ENCODE measurements at regions of chr6 and their contacts with region 1.

Region 1: DNA sequence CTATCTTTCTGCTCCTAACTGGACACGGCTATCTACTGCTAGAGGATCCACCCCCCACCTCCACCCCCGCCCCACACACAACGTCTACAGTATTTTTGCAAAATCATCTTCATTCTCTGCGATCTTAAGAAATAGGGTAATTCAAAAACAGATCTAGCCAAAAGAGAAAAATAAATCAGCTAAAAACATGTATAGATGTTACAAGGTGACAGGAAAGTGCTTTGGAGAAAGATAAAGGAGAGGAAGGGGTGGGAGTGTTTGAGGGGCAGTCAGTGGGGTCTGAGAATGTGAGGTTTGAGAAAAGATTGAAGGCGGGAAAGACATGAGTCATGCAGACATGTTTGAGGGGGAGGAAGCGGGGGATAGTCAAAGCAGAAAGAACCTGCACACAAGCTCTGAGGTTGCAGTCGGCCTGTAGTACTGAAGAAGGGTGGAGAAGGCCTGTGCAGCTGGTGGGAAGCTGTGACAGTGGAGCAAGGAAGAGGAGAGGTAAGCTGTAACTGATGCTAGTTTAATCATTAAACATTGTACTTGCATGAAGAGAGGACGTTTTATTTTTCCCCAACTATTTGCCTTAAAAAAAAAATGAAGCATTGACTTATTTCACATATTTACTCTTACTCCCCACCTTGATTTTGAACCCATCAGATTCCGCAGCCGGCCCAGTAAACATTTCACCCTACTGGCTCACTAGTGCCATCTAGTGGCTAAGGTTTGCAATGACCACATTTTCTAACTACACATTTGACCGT is 332.6 kb downstream of the ADGRB3 start:
- DNase-seq: peak; percentile 51 to 83
- H3K4me3 ChIP-seq: no peak overlapping the region
- H3K4me1 ChIP-seq: 0 out of 2 replicates have a peak, but pooled peaks cover 3% of the 10 kb centered on the region
- H3K27me3 ChIP-seq: no peaks in the 10 kb centered on the region

Region 2: GRCh38 chr6:68634726-68635411 is 332.9 kb before region 1 on chr6 and contains the start of gene ADGRB3:
- in situ Hi-C with region 1: loop called (anchors 25 kb)
- DNase-seq: peak; percentile 88 to 93
- H3K4me3 ChIP-seq: peak within 1 kb of the TSS; percentile 74
- H3K4me1 ChIP-seq: peaks cover 22% of the 10 kb centered on the region
- H3K27me3 ChIP-seq: no peaks in the 10 kb centered on the region

Region 3: GRCh38 chr6:69487688-69488087 is 520.0 kb after region 1 on chr6:
- in situ Hi-C with region 1: no loop called
- DNase-seq: no peak
- H3K4me3 ChIP-seq: no peak overlapping the region
- H3K4me1 ChIP-seq: no peaks in the 10 kb centered on the region
- H3K27me3 ChIP-seq: no peaks in the 10 kb centered on the region